ENCODE measurements at regions of chr12 and their contacts with region 1.

Region 1: GRCh38 chr12:9134981-9135628 is 19.4 kb upstream of the A2M start:
- DNase-seq: no peak
- ATAC-seq: no peak

Region 2: GRCh38 chr12:9096563-9097176 is 38.4 kb before region 1 on chr12:
- intact Hi-C with region 1: loop called (anchors 5 kb)
- DNase-seq: no peak
- ATAC-seq: no peak